A549 (cell line): ENCODE measurements at regions of chr11 and their contacts with region 1.

Region 1: GRCh38 chr11:34174412-34175041 is 69.1 kb downstream of the NAT10 start:
- DNase-seq: peak; percentile 75 to 80
- ATAC-seq: peak; percentile 98 to 99
- H3K4me3 ChIP-seq: peak overlapping the region; percentile 32
- H3K27ac ChIP-seq: peak overlapping the region; percentile 66 to 82
- H3K4me1 ChIP-seq: peaks cover 25% of the 10 kb centered on the region
- CTCF ChIP-seq: peak; percentile 93
- EP300 ChIP-seq: no peak
- POLR2A ChIP-seq: no peak
- RAD21 ChIP-seq: peak; percentile 98 to 100

Region 2: DNA sequence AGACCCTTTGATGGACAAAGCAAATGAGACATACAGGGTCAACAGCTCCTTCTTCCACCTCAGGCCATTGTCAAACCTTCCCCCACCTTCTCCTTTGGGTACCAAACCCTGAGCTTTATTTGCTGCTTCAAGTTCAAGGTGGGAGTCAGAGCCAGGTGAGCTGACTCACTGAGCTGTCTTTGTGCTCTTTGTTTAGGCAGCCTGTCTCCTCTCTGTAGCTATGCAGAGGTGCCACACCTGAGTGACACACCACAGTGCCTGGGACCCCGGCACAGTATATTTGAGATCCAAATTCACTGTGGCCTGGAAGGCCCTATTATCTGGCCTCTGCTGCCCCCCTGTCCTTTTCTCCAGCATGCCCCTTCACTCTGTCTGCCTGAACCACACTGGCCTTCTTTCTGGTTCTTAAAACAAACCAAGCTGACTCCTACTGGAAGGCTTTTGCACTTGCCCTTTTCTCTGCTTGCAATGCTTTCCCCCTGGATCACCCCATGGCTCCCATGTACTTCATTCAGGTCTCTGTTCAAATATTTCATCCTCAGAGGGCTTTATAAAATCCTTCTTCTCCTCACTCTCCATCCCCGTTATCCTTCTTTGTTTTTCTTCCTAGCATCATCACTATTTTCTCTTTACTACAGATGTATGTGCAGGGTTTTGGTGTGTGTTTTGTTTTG is 298.8 kb before region 1 on chr11:
- CTCF ChIA-PET with region 1: no interaction called
- POLR2A ChIA-PET with region 1: no interaction called
- DNase-seq: no peak
- ATAC-seq: no peak
- H3K4me3 ChIP-seq: no peak overlapping the region
- H3K27ac ChIP-seq: no peak overlapping the region
- H3K4me1 ChIP-seq: no peaks in the 10 kb centered on the region
- CTCF ChIP-seq: no peak
- EP300 ChIP-seq: no peak
- POLR2A ChIP-seq: no peak
- RAD21 ChIP-seq: no peak

Region 3: DNA sequence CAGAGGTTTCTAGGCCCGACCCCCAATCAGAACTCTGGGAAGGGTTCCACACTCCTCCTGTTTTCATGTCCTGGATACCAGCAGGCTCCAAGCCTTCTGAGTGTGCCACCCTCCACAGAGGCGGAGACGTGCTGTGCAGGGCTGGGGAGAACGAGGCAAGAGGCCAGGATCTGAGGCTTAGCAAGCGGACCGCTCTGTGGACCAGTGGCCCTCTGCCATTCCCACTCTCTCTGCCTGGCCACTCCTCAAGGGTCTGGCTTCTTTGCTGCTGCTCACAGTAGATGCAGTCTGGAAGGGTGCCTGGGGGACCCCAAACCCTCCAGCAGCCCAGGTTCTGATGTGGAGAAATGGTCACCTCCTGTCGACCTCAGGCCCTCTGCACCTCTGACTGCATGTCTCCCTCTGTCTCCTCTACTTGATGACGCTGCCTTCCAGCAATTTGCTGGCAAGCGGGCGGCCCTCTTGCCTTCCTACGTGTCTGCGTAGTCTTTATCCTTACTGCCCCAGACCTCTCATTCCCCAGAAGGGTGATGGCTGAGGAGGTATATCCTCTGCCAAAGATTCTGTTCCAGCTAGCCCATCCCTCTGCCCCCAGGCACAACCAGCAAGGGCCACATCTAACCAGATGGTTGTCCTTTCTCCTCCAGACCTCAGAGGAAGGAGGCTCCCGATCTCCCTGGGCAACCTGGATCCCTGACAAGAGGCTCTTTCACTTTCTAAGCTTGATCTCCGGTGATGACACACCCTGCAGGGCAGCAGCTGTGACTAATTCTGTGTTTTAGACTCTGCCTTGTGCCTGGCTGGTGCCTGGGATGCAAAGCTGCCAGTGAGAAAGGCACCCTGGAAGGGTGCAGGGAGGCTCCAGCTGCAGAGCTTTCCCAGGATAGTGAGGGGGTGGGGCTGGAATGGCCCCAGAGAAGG is 18.2 kb after region 1 on chr11:
- CTCF ChIA-PET with region 1: interaction called, 30 read pairs
- POLR2A ChIA-PET with region 1: interaction called, 8 read pairs
- DNase-seq: peak; percentile 52 to 78
- ATAC-seq: peak; percentile 88
- H3K4me3 ChIP-seq: no peak overlapping the region
- H3K27ac ChIP-seq: peak overlapping the region; percentile 23 to 76; a peak in 3 of 6 replicates
- H3K4me1 ChIP-seq: peaks cover 28% of the 10 kb centered on the region
- CTCF ChIP-seq: no peak
- EP300 ChIP-seq: no peak
- POLR2A ChIP-seq: no peak
- RAD21 ChIP-seq: no peak

Region 4: GRCh38 chr11:34223021-34223813 is 48.7 kb after region 1 on chr11:
- CTCF ChIA-PET with region 1: interaction called, 27 read pairs
- POLR2A ChIA-PET with region 1: no interaction called
- DNase-seq: no peak
- ATAC-seq: peak in 1 of 2 experiments; percentile 23; a peak in 2 of 6 replicates
- H3K4me3 ChIP-seq: no peak overlapping the region
- H3K27ac ChIP-seq: 0 out of 6 replicates have a peak overlapping the region, but pooled peaks of 1 of the 2 experiments have one; percentile 15
- H3K4me1 ChIP-seq: peaks cover 16% of the 10 kb centered on the region
- CTCF ChIP-seq: no peak
- EP300 ChIP-seq: no peak
- POLR2A ChIP-seq: no peak
- RAD21 ChIP-seq: no peak

Region 5: GRCh38 chr11:34268906-34269430 is 94.4 kb after region 1 on chr11:
- CTCF ChIA-PET with region 1: interaction called, 16 read pairs
- POLR2A ChIA-PET with region 1: no interaction called
- DNase-seq: no peak
- ATAC-seq: no peak
- H3K4me3 ChIP-seq: no peak overlapping the region
- H3K27ac ChIP-seq: peak overlapping the region in 1 of 2 experiments; percentile 4; a peak in 1 of 6 replicates
- H3K4me1 ChIP-seq: peaks cover 46% of the 10 kb centered on the region
- CTCF ChIP-seq: no peak
- EP300 ChIP-seq: no peak
- POLR2A ChIP-seq: no peak
- RAD21 ChIP-seq: no peak

Region 6: DNA sequence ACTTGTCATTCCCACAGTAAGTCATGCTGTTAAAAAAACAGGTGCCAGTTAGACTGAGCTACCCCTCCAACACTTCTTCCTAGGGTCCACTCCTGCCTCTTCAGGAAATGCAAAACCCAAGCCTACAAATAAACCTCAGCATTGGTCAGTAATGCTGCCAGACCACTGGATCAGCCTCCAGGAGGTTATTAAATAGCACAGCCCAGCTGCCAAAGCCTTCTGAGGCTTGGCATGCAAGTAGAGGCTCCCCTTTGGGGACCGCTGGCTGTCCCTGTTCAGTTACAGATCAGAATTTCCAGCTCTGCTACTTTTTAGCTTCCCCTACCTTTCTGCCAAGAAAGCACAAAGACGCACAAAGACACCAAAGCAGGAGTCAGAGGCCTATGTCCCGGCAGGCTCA is 149.9 kb after region 1 on chr11:
- CTCF ChIA-PET with region 1: interaction called, 15 read pairs
- POLR2A ChIA-PET with region 1: no interaction called
- DNase-seq: no peak
- ATAC-seq: no peak
- H3K4me3 ChIP-seq: no peak overlapping the region
- H3K27ac ChIP-seq: peak overlapping the region in 1 of 2 experiments; percentile 1; a peak in 1 of 6 replicates
- H3K4me1 ChIP-seq: peaks cover 31% of the 10 kb centered on the region
- CTCF ChIP-seq: no peak
- EP300 ChIP-seq: no peak
- POLR2A ChIP-seq: no peak
- RAD21 ChIP-seq: no peak

Region 7: DNA sequence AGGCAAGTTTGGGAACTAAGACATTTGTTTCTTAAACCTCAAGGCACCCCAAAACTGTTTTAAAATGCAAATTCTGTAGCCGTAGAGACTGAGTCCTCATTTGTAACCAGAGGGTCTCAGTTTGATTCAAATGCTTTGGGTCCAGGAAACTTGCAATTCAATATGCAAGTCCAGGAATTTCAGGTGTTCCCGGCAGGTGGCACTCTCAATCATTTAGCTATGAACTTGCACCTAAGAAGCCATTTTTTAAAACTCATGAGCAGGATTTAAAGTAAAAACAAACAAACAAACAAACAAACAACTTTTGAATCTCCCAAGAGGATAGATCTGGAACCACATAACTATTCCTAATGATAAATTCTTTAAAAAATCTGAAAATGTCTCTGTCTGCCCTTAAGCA is 192.0 kb after region 1 on chr11:
- CTCF ChIA-PET with region 1: interaction called, 101 read pairs
- POLR2A ChIA-PET with region 1: no interaction called
- DNase-seq: peak in 1 of 2 experiments; percentile 79
- ATAC-seq: 0 out of 6 replicates have a peak, but pooled peaks of 1 of the 2 experiments have one; percentile 31
- H3K4me3 ChIP-seq: no peak overlapping the region
- H3K27ac ChIP-seq: peak overlapping the region in 1 of 2 experiments; percentile 49; a peak in 1 of 6 replicates
- H3K4me1 ChIP-seq: peaks cover 9% of the 10 kb centered on the region; the same call in 2 of the 3 replicates
- CTCF ChIP-seq: peak; percentile 72
- EP300 ChIP-seq: no peak
- POLR2A ChIP-seq: no peak
- RAD21 ChIP-seq: peak; percentile 78 to 79